ENCODE measurements at regions of chr4 and their contacts with region 1.

Region 1: DNA sequence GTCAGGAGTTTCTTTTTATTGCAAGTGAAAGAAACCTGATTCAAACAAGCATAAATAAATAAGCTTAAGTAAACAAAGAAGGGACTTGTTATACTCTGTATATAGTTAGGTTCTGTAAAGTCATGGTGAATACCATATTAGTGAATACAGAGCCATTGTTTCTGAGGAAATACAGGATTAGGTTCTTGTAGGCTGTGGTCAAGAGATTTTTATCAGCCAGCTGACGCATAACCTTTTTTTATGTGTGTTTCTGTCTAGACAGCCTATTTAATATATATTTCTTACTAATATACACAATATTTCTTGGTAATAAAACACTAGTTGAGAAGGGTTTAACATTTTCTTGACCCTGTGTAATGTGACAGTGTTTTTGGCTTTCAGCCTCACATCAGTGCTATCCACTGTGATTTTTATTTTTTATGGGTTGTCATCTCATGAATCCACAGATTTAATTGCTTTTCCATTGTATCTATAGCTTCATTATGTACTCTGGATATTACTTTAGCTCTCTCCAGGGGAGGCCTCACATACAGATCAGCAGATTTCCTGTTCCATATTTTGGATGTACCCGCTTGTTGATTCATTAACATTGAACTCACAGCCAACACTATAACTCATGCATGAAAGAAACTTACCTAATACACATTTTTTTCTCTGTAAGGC is 8.0 kb downstream of the HERC3 start:
- DNase-seq: no peak
- H3K4me3 Mint-ChIP-seq: no peak overlapping the region
- H3K27ac Mint-ChIP-seq: no peak overlapping the region
- H3K4me1 Mint-ChIP-seq: peaks cover 74% of the 10 kb centered on the region
- H3K27me3 Mint-ChIP-seq: no peaks in the 10 kb centered on the region

Region 2: DNA sequence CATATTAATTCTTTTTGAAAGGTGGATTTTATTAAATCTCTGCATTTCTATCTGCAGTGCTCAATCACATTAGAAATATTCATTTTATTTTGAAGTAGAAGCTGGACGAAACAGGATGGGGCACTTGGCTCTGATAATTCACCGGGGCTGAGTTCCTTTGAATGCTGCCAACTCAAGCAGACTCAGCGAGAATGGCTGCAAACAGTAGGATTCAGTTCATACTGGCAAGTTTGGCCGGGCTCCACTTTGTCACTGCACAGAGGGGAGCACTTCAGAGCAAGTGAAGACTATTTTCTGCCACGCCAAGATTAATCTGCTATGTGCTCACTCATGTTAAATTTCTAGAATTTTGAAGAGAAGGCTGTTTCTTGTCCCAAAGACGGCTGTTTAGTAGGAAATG is 1349.2 kb before region 1 on chr4:
- CTCF ChIA-PET with region 1: no interaction called
- intact Hi-C with region 1: no loop called
- DNase-seq: no peak
- H3K4me3 Mint-ChIP-seq: no peak overlapping the region
- H3K27ac Mint-ChIP-seq: no peak overlapping the region
- H3K4me1 Mint-ChIP-seq: no peaks in the 10 kb centered on the region
- H3K27me3 Mint-ChIP-seq: peaks cover 3% of the 10 kb centered on the region

Region 3: DNA sequence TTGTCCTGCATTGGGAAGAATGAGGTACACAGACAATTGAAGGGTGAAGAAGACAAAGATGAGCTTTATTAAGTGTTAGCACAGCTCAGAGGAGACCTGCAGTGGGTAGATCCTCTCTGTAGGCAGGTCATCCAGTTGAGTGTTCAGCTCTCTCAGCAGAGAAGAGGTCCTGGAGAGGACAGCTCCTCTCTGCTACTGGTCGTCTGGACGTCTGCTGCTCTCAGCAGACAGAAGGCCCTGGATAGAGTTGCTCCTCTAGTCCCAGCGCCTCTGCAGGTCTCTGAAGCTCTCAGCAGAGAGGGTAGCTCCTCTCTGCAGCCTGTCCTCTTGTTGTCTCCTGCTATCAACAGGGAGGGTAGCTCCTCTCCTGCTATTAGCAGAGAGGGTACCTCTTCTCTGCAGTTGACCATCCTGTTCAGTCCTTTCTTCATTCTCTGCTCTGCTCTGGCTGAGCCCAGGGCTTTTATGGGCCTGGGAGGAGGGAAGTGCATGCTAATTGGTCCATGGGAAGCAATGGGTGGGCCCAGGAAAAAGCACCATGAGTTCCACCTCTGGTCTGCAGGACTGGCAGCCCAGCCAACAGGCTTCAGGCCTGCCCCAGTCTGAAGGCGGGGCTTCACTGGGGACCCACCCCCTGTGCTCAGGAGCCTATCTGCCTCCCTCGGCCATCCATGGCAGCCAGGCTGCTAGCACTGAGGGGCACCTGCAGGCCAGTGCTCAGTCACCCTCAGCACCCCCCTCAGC is 855.1 kb before region 1 on chr4:
- CTCF ChIA-PET with region 1: no interaction called
- intact Hi-C with region 1: no loop called
- DNase-seq: no peak
- H3K4me3 Mint-ChIP-seq: no peak overlapping the region
- H3K27ac Mint-ChIP-seq: no peak overlapping the region
- H3K4me1 Mint-ChIP-seq: no peaks in the 10 kb centered on the region
- H3K27me3 Mint-ChIP-seq: no peaks in the 10 kb centered on the region

Region 4: DNA sequence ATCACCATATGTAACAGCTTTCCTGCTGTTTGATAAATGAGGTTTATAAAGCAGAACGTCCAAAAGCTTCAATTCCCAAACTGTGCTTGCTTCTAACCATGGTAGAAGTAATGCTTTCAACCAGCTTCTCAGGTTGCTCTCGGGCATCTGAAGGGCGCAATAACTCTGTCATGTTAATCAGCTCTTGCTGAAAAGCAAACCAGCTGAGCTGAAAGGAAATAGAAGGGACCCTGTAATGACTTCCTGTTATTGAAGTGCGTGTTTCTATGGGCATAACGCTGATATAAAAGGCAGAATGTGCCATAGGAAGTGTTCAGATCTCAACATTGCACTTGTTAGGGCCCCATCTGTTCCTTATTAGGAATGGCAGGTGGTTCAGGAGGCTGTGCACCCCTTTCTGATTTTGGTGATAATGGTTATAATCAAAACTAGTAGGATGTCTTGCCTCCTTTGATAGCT is 13.1 kb after region 1 on chr4:
- CTCF ChIA-PET with region 1: interaction called, 12 read pairs
- intact Hi-C with region 1: no loop called
- DNase-seq: peak; percentile 62
- H3K4me3 Mint-ChIP-seq: peak overlapping the region; percentile 64
- H3K27ac Mint-ChIP-seq: peak overlapping the region; percentile 92
- H3K4me1 Mint-ChIP-seq: peaks cover 82% of the 10 kb centered on the region
- H3K27me3 Mint-ChIP-seq: no peaks in the 10 kb centered on the region

Region 5: GRCh38 chr4:89307446-89308160 is 707.3 kb after region 1 on chr4 and contains the start of gene GPRIN3:
- CTCF ChIA-PET with region 1: no interaction called
- intact Hi-C with region 1: loop called (anchors 5 kb)
- DNase-seq: peak; percentile 75
- H3K4me3 Mint-ChIP-seq: peak within 1 kb of the TSS; percentile 90
- H3K27ac Mint-ChIP-seq: peak within 1 kb of the TSS; percentile 78
- H3K4me1 Mint-ChIP-seq: peaks cover 55% of the 10 kb centered on the region
- H3K27me3 Mint-ChIP-seq: no peaks in the 10 kb centered on the region
- total RNA-seq, gene GPRIN3: 8.6 to 8.8 TPM

Measured in activated naive CD4-positive, alpha-beta T cell treated with anti-CD3 and anti-CD28 coated beads for 36 hours (primary cell).